Endothelial cell of umbilical vein (primary cell): ENCODE measurements at regions of chr19 and their contacts with region 1.

Region 1: DNA sequence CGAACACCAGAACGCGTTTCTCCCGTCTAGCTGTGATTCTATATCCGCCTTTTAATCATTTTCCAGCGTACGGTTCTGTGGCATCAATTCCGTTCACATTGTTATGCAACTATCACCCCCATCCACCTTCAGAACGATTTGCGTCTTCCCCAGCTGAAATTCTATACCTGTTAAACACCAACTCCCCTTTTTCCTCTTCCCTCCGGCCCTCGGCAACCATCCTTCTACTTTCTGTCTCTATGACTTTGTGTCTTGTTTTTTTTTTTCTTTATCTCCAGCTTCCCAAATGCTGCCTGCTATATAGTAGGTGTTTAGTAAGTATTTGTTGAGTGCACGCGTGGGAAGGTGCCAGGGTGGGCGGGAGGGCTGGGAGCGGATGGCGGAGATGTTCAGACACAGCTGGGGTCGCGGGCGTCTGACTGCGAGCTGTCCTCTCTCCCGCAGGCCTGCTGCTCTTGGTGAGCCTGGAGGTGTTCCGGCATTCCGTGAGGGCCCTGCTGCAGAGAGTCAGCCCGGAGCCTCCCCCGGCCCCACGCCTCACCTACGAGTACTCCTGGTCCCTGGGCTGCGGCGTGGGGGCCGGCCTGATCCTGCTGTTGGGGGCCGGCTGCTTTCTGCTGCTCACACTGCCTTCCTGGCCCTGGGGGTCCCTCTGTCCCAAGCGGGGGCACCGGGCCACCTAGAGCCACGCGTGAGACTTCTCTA is 20.2 kb downstream of the CACNG6 start:
- DNase-seq: no peak
- H3K4me3 ChIP-seq: no peak overlapping the region
- H3K27ac ChIP-seq: no peak overlapping the region
- H3K4me1 ChIP-seq: peaks cover 18% of the 10 kb centered on the region
- H3K27me3 ChIP-seq: no peaks in the 10 kb centered on the region
- CTCF ChIP-seq: no peak
- POLR2A ChIP-seq: no peak

Region 2: DNA sequence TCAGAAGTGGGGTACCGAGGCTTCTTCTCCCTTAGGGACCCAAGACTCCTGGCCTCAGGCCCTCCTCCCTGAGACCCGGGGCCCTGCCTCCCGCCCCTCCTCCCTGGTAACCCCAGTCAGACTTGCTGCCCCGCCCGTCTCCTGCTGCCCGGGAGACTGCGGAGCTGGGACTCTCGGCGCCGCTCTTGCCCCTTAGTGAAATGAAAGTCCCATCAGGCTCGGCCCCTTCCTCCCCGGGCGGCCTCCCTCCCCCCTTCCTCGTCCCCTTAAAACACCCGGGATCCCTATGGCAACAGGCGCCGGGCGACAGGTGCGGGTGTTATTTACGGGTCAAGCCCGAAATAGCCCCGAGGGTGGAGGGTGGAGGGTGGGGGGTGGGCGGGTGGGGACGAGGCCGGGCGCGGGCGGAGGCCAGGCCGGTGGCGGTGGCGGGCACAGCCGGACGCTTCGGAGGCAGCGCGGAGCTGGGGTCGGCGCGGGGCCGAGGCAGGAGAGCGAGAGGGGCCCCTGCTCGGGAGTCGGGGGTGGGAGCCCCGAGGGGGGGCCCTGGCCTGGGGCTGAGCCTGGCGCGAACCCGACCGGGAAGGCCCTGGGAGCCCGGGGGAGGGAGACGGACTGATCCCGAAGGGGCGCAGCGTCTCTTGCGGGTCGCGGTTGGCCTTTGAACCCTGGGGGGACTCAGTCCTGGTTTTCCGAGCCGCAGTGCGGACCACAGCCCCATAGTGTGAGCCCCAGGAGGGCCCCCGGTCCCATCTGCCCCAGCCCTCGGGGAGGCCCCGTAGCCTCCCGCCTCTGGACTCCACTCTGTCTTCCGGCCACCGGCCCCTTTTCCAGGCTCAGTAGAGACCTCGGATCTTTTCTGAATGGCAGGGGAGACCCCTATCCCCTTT is 20.2 kb before region 1 on chr19 and contains the start of gene CACNG6:
- CTCF ChIA-PET with region 1: interaction called, 4 read pairs
- POLR2A ChIA-PET with region 1: interaction called, 4 read pairs
- dilution Hi-C with region 1: no loop called
- intact Hi-C with region 1: loop called (anchors 1 kb)
- DNase-seq: peak; percentile 56
- H3K4me3 ChIP-seq: peak within 1 kb of the TSS; percentile 15 to 26 (median 25)
- H3K27ac ChIP-seq: peak within 1 kb of the TSS; percentile 74
- H3K4me1 ChIP-seq: peaks cover 39% of the 10 kb centered on the region
- H3K27me3 ChIP-seq: no peaks in the 10 kb centered on the region
- CTCF ChIP-seq: no peak
- POLR2A ChIP-seq: peak; percentile 38
- total RNA-seq, gene CACNG6: 4.0 and 5.4 TPM in 2 replicates

Region 3: DNA sequence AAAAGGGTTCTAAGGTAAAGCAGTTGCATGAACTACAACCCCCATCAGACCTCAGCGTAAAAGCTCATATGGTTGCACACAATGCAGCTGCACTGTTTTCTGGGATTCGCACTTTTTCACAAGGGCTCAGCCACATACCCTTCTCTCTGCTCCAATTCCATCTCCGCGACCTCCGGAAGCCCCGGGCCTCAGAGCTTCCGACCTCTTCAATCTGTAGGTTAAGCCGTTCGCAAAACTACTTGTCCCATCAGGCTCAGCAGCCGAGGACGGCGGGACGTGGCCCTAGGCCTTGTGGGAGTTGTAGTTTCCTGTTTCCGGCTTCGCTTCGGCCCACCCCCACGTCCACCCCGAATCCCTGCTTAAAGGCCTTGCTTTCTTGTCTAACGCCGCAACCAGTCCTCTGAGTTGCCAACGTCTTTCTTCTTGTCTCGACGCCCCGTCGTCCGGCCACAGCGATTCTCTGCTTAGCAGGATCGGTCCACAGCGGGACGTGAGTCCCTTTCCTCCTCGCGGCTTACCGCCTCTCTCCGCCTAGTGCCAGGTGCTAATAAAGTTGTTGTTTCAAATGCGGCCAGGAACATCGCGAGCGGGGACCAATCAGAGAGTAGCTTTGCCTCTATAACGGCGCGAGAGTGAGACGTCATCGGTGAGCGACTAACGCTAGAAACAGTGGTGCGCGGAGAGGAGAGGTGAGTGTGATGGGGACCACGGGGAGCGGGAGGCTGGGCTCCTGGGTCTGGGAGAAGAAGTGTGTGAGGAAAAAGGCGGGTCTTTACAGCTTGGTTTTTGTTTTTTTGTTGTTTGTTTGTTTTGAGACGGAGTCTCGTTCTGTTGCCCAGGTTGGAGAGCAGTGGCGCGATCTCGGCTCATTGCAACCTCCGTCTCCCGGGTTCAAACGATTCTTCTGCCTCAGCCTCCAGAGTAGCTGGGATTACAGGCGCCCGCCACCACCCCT is 103.7 kb after region 1 on chr19 and contains the starts of genes PRPF31 and TFPT:
- CTCF ChIA-PET with region 1: no interaction called
- POLR2A ChIA-PET with region 1: no interaction called
- dilution Hi-C with region 1: no loop called
- intact Hi-C with region 1: no loop called
- DNase-seq: peak; percentile 98
- H3K4me3 ChIP-seq: peak within 1 kb of the TSS; percentile 51 to 81 (median 68)
- H3K27ac ChIP-seq: peak within 1 kb of the TSS; percentile 73
- H3K4me1 ChIP-seq: peaks cover 7% of the 10 kb centered on the region
- H3K27me3 ChIP-seq: no peaks in the 10 kb centered on the region
- CTCF ChIP-seq: no peak
- POLR2A ChIP-seq: peak; percentile 71
- total RNA-seq, gene PRPF31: 99.1 and 101 TPM in 2 replicates
- total RNA-seq, gene TFPT: 32.1 and 36.2 TPM in 2 replicates